HCT116 (cell line): ENCODE measurements at regions of chr1 and their contacts with region 1.

Region 1: GRCh38 chr1:119613769-119614720 is 34.0 kb downstream of the ZNF697 start:
- DNase-seq: peak; percentile 68
- ATAC-seq: peak; percentile 88
- H3K4me3 ChIP-seq: no peak overlapping the region
- H3K27ac ChIP-seq: no peak overlapping the region
- H3K4me1 ChIP-seq: no peaks in the 10 kb centered on the region
- H3K27me3 ChIP-seq: no peaks in the 10 kb centered on the region
- CTCF ChIP-seq: peak; percentile 68 to 82 (median 81)
- POLR2A ChIP-seq: no peak
- RAD21 ChIP-seq: peak; percentile 88

Region 2: GRCh38 chr1:119372490-119373086 is 241.5 kb before region 1 on chr1:
- CTCF ChIA-PET with region 1: interaction called, 7 read pairs
- POLR2A ChIA-PET with region 1: no interaction called
- RAD21 ChIA-PET with region 1: interaction called in 1 of 2 experiments, 4 read pairs
- intact Hi-C with region 1: loop called (anchors 2 kb)
- DNase-seq: peak; percentile 49
- ATAC-seq: peak; percentile 79
- H3K4me3 ChIP-seq: no peak overlapping the region
- H3K27ac ChIP-seq: no peak overlapping the region
- H3K4me1 ChIP-seq: peaks cover 0 to 8% of the 10 kb centered on the region in 2 experiments; a peak in 1 of 4 replicates
- H3K27me3 ChIP-seq: 0 out of 2 replicates have a peak, but pooled peaks cover 7% of the 10 kb centered on the region
- CTCF ChIP-seq: peak; percentile 10 to 35 (median 25); a peak in 2 of 6 replicates
- POLR2A ChIP-seq: no peak
- RAD21 ChIP-seq: peak; percentile 54; the same call in 1 of the 2 replicates

Region 3: GRCh38 chr1:119531624-119532323 is 82.3 kb before region 1 on chr1:
- CTCF ChIA-PET with region 1: no interaction called
- POLR2A ChIA-PET with region 1: no interaction called
- RAD21 ChIA-PET with region 1: no interaction called
- intact Hi-C with region 1: no loop called
- DNase-seq: no peak
- ATAC-seq: no peak
- H3K4me3 ChIP-seq: no peak overlapping the region
- H3K27ac ChIP-seq: no peak overlapping the region
- H3K4me1 ChIP-seq: no peaks in the 10 kb centered on the region
- H3K27me3 ChIP-seq: peaks cover 32% of the 10 kb centered on the region; the same call in 1 of the 2 replicates
- CTCF ChIP-seq: no peak
- POLR2A ChIP-seq: no peak
- RAD21 ChIP-seq: no peak

Region 4: GRCh38 chr1:119662034-119662437 is 48.0 kb after region 1 on chr1:
- CTCF ChIA-PET with region 1: interaction called, 11 read pairs
- POLR2A ChIA-PET with region 1: interaction called, 3 read pairs
- RAD21 ChIA-PET with region 1: interaction called in 1 of 2 experiments, 3 read pairs
- intact Hi-C with region 1: loop called (anchors 1 kb)
- DNase-seq: no peak
- ATAC-seq: no peak
- H3K4me3 ChIP-seq: no peak overlapping the region
- H3K27ac ChIP-seq: no peak overlapping the region
- H3K4me1 ChIP-seq: peaks cover 0 to 5% of the 10 kb centered on the region in 2 experiments; a peak in 1 of 4 replicates
- H3K27me3 ChIP-seq: peaks cover 2% of the 10 kb centered on the region; the same call in 1 of the 2 replicates
- CTCF ChIP-seq: 0 out of 6 replicates have a peak, but pooled peaks of 1 of the 3 experiments have one; percentile 3
- POLR2A ChIP-seq: no peak
- RAD21 ChIP-seq: no peak

Region 5: DNA sequence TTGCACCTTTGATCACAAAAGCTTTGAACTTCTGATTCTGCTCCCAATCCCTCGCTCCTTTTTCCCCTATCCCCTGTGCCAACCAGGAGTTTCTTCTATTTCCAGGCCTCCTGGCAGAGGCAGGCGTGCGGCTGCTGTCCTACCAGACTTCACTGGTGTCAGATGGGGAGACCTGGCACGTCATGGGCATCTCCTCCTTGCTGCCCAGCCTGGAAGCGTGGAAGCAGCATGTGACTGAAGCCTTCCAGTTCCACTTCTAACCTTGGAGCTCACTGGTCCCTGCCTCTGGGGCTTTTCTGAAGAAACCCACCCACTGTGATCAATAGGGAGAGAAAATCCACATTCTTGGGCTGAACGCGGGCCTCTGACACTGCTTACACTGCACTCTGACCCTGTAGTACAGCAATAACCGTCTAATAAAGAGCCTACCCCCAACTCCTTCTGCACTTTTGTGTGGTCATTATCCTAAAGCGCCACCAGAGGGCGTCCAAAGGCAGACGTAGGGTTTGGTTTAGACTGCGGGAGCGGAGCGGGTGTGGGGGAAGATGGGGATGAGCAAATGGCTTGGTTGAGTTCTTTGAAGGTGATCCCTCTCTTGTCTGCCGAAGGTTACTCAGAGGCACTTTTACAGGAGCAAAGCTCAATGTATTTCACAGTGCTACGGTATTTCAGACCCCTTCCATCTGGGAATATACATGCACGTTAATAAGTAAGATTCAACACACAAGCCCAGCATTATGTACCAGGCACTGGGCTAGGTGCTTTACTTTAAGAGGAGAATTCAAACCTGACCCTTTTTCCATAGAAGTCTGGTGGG is 129.9 kb after region 1 on chr1:
- CTCF ChIA-PET with region 1: interaction called, 4 read pairs
- POLR2A ChIA-PET with region 1: no interaction called
- RAD21 ChIA-PET with region 1: no interaction called
- intact Hi-C with region 1: loop called (anchors 5 kb)
- DNase-seq: peak; percentile 44
- ATAC-seq: peak; percentile 92
- H3K4me3 ChIP-seq: no peak overlapping the region
- H3K27ac ChIP-seq: no peak overlapping the region
- H3K4me1 ChIP-seq: no peaks in the 10 kb centered on the region
- H3K27me3 ChIP-seq: no peaks in the 10 kb centered on the region
- CTCF ChIP-seq: peak; percentile 58 to 90 (median 87); a peak in 5 of 6 replicates
- POLR2A ChIP-seq: no peak
- RAD21 ChIP-seq: peak; percentile 72

Region 6: DNA sequence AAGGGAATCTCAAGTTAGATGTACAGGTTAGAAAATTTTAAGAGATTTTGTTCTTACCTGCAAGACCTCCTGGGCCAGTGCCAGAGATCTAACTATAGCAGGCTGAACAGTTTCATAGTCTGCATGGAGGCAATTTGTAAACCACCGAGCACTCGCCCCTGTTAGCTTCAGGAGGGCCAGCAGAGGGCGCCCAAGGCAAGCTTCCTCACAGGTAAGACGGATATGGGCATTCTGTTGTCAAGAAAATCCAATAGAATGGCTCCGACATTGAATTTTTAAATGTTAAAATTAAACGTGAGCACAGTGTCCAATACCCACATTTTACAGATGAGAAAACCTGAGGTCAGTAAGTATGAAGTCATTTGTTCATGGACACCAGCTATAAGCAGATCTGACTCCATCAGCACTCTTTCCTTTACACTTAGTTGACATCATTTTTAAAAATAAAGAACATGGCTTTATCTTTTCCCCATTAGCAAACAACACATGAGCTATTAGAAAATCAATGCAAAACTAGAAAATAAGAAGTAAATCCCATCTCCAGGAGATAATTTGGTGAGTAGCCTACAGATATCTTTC is 195.0 kb after region 1 on chr1:
- CTCF ChIA-PET with region 1: no interaction called
- POLR2A ChIA-PET with region 1: no interaction called
- RAD21 ChIA-PET with region 1: no interaction called
- intact Hi-C with region 1: loop called (anchors 2 kb)
- DNase-seq: peak; percentile 64
- ATAC-seq: peak; percentile 100
- H3K4me3 ChIP-seq: no peak overlapping the region
- H3K27ac ChIP-seq: no peak overlapping the region
- H3K4me1 ChIP-seq: peaks cover 0 to 8% of the 10 kb centered on the region in 2 experiments; a peak in 1 of 4 replicates
- H3K27me3 ChIP-seq: peaks cover 11% of the 10 kb centered on the region; the same call in 1 of the 2 replicates
- CTCF ChIP-seq: peak; percentile 62 to 95 (median 90); a peak in 5 of 6 replicates
- POLR2A ChIP-seq: no peak
- RAD21 ChIP-seq: peak; percentile 68

Region 7: GRCh38 chr1:119968068-119968492 is 354.0 kb after region 1 on chr1:
- CTCF ChIA-PET with region 1: no interaction called
- POLR2A ChIA-PET with region 1: no interaction called
- RAD21 ChIA-PET with region 1: no interaction called
- intact Hi-C with region 1: loop called (anchors 10 kb)
- DNase-seq: peak; percentile 47
- ATAC-seq: peak; percentile 99
- H3K4me3 ChIP-seq: no peak overlapping the region
- H3K27ac ChIP-seq: no peak overlapping the region
- H3K4me1 ChIP-seq: peaks cover 0 to 3% of the 10 kb centered on the region in 2 experiments; a peak in 1 of 4 replicates
- H3K27me3 ChIP-seq: no peaks in the 10 kb centered on the region
- CTCF ChIP-seq: peak; percentile 49 to 93 (median 87); a peak in 5 of 6 replicates
- POLR2A ChIP-seq: no peak
- RAD21 ChIP-seq: peak; percentile 43